ENCODE measurements at regions of chr2 and their contacts with region 1.

Region 1: GRCh38 chr2:240250985-240251847 is 110.8 kb upstream of the OTOS start:
- DNase-seq: peak; percentile 46 to 96 (median 92)
- H3K4me3 ChIP-seq: peak overlapping the region in 30 of 59 donors; percentile 0 to 51 (median 28)
- H3K27ac ChIP-seq: peak overlapping the region; percentile 72 to 99 (median 95)
- H3K27me3 ChIP-seq: no peaks in the 10 kb centered on the region
- CTCF ChIP-seq: peak in 7 of 56 donors; percentile 6 to 22 (median 12)

Region 2: DNA sequence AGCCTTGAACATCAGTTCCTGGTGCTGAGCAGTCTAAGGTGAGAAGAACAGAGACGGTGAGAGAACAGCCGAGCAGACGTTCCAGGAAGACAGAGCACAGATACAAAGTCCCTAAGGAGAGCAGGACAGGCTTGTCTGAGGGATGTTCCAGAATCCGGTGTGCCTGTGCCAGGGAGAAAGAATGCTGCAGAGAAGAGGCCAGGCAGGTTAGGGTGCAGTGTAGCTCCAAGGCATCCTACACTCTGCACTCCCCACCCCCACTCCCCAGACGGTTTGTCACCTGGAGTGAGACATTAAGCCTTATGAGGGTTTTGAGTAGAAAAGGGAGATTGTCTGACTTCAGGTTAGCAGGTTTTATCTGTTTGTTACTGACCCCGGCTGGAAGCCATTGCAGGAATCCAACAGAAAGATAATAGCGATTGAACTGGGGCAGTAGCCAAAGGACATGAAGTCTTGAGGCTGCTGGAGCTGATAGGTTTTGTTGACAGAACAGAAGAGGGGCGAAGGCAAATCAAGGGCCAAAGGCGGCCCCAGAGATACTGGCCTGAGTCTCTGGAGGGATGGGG is 162.0 kb before region 1 on chr2:
- intact Hi-C with region 1: no loop called
- DNase-seq: no peak
- H3K4me3 ChIP-seq: no peak overlapping the region
- H3K27ac ChIP-seq: no peak overlapping the region
- H3K27me3 ChIP-seq: peaks cover 0 to 27% (median 10%) of the 10 kb centered on the region in 45 donors
- CTCF ChIP-seq: no peak

Region 3: GRCh38 chr2:240320204-240320993 is 69.2 kb after region 1 on chr2:
- intact Hi-C with region 1: loop called in 1 of 2 experiments (anchors 5 kb)
- DNase-seq: peak in 2 of 10 donors; percentile 50 to 67
- H3K4me3 ChIP-seq: peak overlapping the region in 4 of 59 donors; percentile 1 to 27 (median 8)
- H3K27ac ChIP-seq: peak overlapping the region in 19 of 59 donors; percentile 4 to 66 (median 39)
- H3K27me3 ChIP-seq: peaks cover 0 to 2% (median 0%) of the 10 kb centered on the region in 45 donors
- CTCF ChIP-seq: peak in 1 of 56 donors; percentile 10

Region 4: GRCh38 chr2:240339996-240340761 is 89.0 kb after region 1 on chr2:
- intact Hi-C with region 1: loop called in 1 of 2 experiments (anchors 1 kb)
- DNase-seq: peak in 9 of 10 donors; percentile 79 to 88 (median 82)
- H3K4me3 ChIP-seq: peak overlapping the region in 5 of 59 donors; percentile 1 to 32 (median 5)
- H3K27ac ChIP-seq: peak overlapping the region in 58 of 59 donors; percentile 5 to 95 (median 80)
- H3K27me3 ChIP-seq: peaks cover 0 to 4% (median 0%) of the 10 kb centered on the region in 45 donors
- CTCF ChIP-seq: peak in 9 of 56 donors; percentile 11 to 23 (median 15)

Measured in dorsolateral prefrontal cortex (tissue), 120 donors.